Naive thymus-derived CD4-positive, alpha-beta T cell (primary cell): ENCODE measurements at regions of chr22 and their contacts with region 1.

Region 1: GRCh38 chr22:36331306-36331911 is 56.4 kb downstream of the MYH9 start:
- DNase-seq: peak; percentile 42 to 83 (median 73)
- ATAC-seq: peak; percentile 78
- H3K4me3 ChIP-seq: peak overlapping the region; percentile 57
- H3K4me3 Mint-ChIP-seq: peak overlapping the region; percentile 83 to 95 (median 92)
- H3K27ac ChIP-seq: peak overlapping the region; percentile 82
- H3K27ac Mint-ChIP-seq: peak overlapping the region; percentile 96 to 100 (median 99)
- H3K4me1 ChIP-seq: peaks cover 87 to 92% of the 10 kb centered on the region in 2 donors
- H3K4me1 Mint-ChIP-seq: peaks cover 84 to 100% (median 98%) of the 10 kb centered on the region in 7 donors
- H3K27me3 ChIP-seq: no peaks in the 10 kb centered on the region
- H3K27me3 Mint-ChIP-seq: no peaks in the 10 kb centered on the region

Region 2: GRCh38 chr22:36356708-36357694 is 25.6 kb after region 1 on chr22:
- CTCF ChIA-PET with region 1: interaction called, 3 read pairs
- POLR2A ChIA-PET with region 1: interaction called, 1,512 read pairs
- intact Hi-C with region 1: loop called (anchors 1 kb)
- DNase-seq: peak in 3 of 9 donors; percentile 44 to 64 (median 55)
- ATAC-seq: peak; percentile 52
- H3K4me3 ChIP-seq: peak overlapping the region; percentile 39
- H3K4me3 Mint-ChIP-seq: peak overlapping the region; percentile 75 to 89 (median 83)
- H3K27ac ChIP-seq: peak overlapping the region; percentile 57
- H3K27ac Mint-ChIP-seq: peak overlapping the region; percentile 82 to 98 (median 94)
- H3K4me1 ChIP-seq: peaks cover 94 to 96% of the 10 kb centered on the region in 2 donors
- H3K4me1 Mint-ChIP-seq: peaks cover 69 to 100% (median 94%) of the 10 kb centered on the region in 7 donors
- H3K27me3 ChIP-seq: no peaks in the 10 kb centered on the region
- H3K27me3 Mint-ChIP-seq: no peaks in the 10 kb centered on the region

Region 3: GRCh38 chr22:36379593-36380361 is 48.4 kb after region 1 on chr22:
- CTCF ChIA-PET with region 1: interaction called, 31 read pairs
- POLR2A ChIA-PET with region 1: interaction called, 1,512 read pairs
- intact Hi-C with region 1: loop called in 1 of 2 experiments (anchors 2 kb)
- DNase-seq: peak in 7 of 9 donors; percentile 59 to 68 (median 63)
- ATAC-seq: peak; percentile 56
- H3K4me3 ChIP-seq: peak overlapping the region; percentile 47
- H3K4me3 Mint-ChIP-seq: peak overlapping the region; percentile 80 to 92 (median 88)
- H3K27ac ChIP-seq: peak overlapping the region; percentile 80
- H3K27ac Mint-ChIP-seq: peak overlapping the region; percentile 95 to 100 (median 98)
- H3K4me1 ChIP-seq: peaks cover 84% of the 10 kb centered on the region in 2 donors
- H3K4me1 Mint-ChIP-seq: peaks cover 41 to 95% (median 89%) of the 10 kb centered on the region in 7 donors
- H3K27me3 ChIP-seq: no peaks in the 10 kb centered on the region
- H3K27me3 Mint-ChIP-seq: no peaks in the 10 kb centered on the region

Region 4: GRCh38 chr22:36470162-36470993 is 139.0 kb after region 1 on chr22:
- CTCF ChIA-PET with region 1: interaction called, 14 read pairs
- POLR2A ChIA-PET with region 1: interaction called, 7 read pairs
- intact Hi-C with region 1: loop called (anchors 1 to 2 kb)
- DNase-seq: peak; percentile 58 to 90 (median 87)
- ATAC-seq: peak; percentile 97
- H3K4me3 ChIP-seq: no peak overlapping the region
- H3K4me3 Mint-ChIP-seq: peak overlapping the region in 2 of 10 donors; percentile 18 to 30
- H3K27ac ChIP-seq: peak overlapping the region; percentile 34
- H3K27ac Mint-ChIP-seq: peak overlapping the region in 7 of 9 donors; percentile 57 to 87 (median 69)
- H3K4me1 ChIP-seq: peaks cover 6 to 18% of the 10 kb centered on the region in 2 donors
- H3K4me1 Mint-ChIP-seq: peaks cover 9 to 32% (median 25%) of the 10 kb centered on the region in 7 donors
- H3K27me3 ChIP-seq: no peaks in the 10 kb centered on the region
- H3K27me3 Mint-ChIP-seq: no peaks in the 10 kb centered on the region

Region 5: DNA sequence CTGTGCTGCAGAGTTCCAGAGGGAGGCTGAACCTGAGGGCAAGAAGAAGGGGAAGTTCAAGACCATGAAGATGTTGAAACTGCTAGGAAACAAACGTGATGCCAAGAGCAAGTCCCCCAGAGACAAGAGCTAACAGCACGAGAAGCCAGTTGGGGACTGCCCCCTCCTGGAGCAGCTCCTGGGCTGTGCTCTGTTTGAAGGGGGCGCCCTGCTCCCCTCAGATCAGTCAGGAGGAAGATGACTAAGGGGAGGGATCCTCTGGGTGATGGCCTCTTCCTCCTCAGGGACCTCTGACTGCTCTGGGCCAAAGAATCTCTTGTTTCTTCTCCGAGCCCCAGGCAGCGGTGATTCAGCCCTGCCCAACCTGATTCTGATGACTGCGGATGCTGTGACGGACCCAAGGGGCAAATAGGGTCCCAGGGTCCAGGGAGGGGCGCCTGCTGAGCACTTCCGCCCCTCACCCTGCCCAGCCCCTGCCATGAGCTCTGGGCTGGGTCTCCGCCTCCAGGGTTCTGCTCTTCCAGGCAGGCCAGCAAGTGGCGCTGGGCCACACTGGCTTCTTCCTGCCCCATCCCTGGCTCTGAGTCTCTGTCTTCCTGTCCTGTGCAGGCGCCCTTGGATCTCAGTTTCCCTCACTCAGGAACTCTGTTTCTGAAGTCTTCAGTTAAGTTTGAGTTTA is 1609.4 kb after region 1 on chr22:
- CTCF ChIA-PET with region 1: no interaction called
- POLR2A ChIA-PET with region 1: no interaction called
- intact Hi-C with region 1: no loop called
- DNase-seq: no peak
- ATAC-seq: no peak
- H3K4me3 ChIP-seq: no peak overlapping the region
- H3K4me3 Mint-ChIP-seq: no peak overlapping the region
- H3K27ac ChIP-seq: no peak overlapping the region
- H3K27ac Mint-ChIP-seq: no peak overlapping the region
- H3K4me1 ChIP-seq: no peaks in the 10 kb centered on the region
- H3K4me1 Mint-ChIP-seq: peaks cover 0 to 2% (median 0%) of the 10 kb centered on the region in 7 donors
- H3K27me3 ChIP-seq: no peaks in the 10 kb centered on the region
- H3K27me3 Mint-ChIP-seq: no peaks in the 10 kb centered on the region